H1 (cell line): ENCODE measurements at regions of chr4 and their contacts with region 1.

Region 1: GRCh38 chr4:170990989-170991589 is 822.1 kb upstream of the GALNTL6 start:
- DNase-seq: peak; percentile 27 to 55
- H3K4me3 ChIP-seq: no peak overlapping the region
- H3K27ac ChIP-seq: no peak overlapping the region
- H3K4me1 ChIP-seq: no peaks in the 10 kb centered on the region
- H3K27me3 ChIP-seq: no peaks in the 10 kb centered on the region
- CTCF ChIP-seq: peak in 2 of 3 experiments; percentile 64 to 78; a peak in 3 of 4 replicates
- EP300 ChIP-seq: no peak
- POLR2A ChIP-seq: no peak
- RAD21 ChIP-seq: peak; percentile 80 to 91

Region 2: DNA sequence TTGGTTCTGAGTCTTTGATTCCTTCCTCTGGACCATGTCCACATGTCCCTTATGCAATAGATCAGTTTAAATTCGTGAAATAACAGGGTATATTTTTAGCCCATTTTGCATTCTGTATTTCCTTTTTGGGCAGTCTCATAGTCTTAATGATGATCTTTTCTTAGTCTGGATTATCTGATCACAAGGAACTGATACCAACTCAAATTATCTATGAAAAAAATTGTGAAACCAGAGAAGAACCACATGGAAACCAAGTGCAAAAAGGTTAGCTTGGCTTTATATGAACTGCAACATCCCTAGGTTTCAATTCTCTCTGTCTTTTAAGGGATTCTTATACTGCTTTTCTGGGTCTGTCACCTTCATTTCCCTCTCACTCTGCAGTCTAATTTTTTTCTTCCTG is 292.8 kb before region 1 on chr4:
- CTCF ChIA-PET with region 1: no interaction called
- POLR2A ChIA-PET with region 1: no interaction called
- DNase-seq: no peak
- H3K4me3 ChIP-seq: no peak overlapping the region
- H3K27ac ChIP-seq: no peak overlapping the region
- H3K4me1 ChIP-seq: no peaks in the 10 kb centered on the region
- H3K27me3 ChIP-seq: no peaks in the 10 kb centered on the region
- CTCF ChIP-seq: no peak
- EP300 ChIP-seq: no peak
- POLR2A ChIP-seq: no peak
- RAD21 ChIP-seq: no peak

Region 3: DNA sequence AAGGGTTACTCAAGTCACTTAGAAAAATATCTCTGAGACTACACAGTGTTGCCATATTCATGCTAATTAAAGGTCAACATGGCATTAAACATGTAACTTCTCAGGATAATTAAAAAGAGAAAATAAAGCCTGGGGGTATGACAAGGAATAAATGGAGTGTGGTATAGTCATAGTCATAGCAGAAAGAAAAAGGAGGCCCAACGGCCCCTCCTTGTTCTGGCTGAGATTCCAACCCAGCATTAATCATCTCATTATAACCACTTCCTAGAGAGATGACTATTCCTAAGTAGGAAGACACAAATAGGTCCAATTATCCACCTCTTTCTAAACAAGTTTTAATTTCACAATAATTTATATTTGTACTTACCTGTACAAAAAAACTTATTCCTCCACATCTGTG is 122.9 kb before region 1 on chr4:
- CTCF ChIA-PET with region 1: no interaction called
- POLR2A ChIA-PET with region 1: no interaction called
- DNase-seq: no peak
- H3K4me3 ChIP-seq: no peak overlapping the region
- H3K27ac ChIP-seq: no peak overlapping the region
- H3K4me1 ChIP-seq: no peaks in the 10 kb centered on the region
- H3K27me3 ChIP-seq: no peaks in the 10 kb centered on the region
- CTCF ChIP-seq: no peak
- EP300 ChIP-seq: no peak
- POLR2A ChIP-seq: no peak
- RAD21 ChIP-seq: no peak

Region 4: DNA sequence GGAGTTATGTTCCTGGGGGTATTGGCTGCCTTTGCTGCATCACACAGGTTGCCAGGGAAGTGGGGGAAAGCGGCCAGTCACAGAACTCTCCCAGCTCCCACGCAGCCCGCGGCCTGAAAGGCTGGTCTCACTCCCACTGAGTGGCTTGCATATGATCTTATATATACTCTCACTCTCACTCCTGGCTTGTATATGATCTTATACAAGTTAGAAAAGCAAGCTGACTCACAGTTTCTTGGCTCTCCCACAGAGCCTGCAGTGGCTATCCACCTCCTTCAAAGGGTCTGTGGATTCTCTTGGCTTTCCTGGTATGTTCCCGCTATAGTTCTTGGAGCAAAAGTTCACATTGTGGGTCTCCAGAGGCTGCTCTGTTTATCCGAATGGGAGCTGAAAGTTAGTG is 11.4 kb before region 1 on chr4:
- CTCF ChIA-PET with region 1: interaction called, 12 read pairs
- POLR2A ChIA-PET with region 1: no interaction called
- DNase-seq: no peak
- H3K4me3 ChIP-seq: no peak overlapping the region
- H3K27ac ChIP-seq: no peak overlapping the region
- H3K4me1 ChIP-seq: no peaks in the 10 kb centered on the region
- H3K27me3 ChIP-seq: no peaks in the 10 kb centered on the region
- CTCF ChIP-seq: no peak
- EP300 ChIP-seq: no peak
- POLR2A ChIP-seq: no peak
- RAD21 ChIP-seq: no peak

Region 5: DNA sequence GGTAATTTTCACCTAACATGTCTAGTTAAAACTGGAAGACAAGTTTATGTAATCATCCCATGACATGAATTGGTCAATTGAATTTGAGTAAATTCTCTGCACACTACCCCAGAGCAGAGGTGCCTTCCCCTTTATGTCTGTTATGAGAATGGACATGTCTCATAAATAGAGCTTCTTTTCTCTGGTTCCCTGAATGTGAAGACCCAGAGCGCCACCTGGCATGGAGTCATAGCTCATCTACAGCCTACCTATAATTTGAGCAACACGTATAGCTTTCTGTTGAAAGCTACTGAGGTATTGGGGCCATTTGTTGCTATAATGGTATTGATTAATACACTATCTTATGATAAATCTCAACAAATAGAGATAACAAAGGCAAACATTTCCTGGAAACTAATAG is 195.6 kb after region 1 on chr4:
- CTCF ChIA-PET with region 1: interaction called, 19 read pairs
- POLR2A ChIA-PET with region 1: no interaction called
- DNase-seq: no peak
- H3K4me3 ChIP-seq: no peak overlapping the region
- H3K27ac ChIP-seq: no peak overlapping the region
- H3K4me1 ChIP-seq: no peaks in the 10 kb centered on the region
- H3K27me3 ChIP-seq: no peaks in the 10 kb centered on the region
- CTCF ChIP-seq: peak in 2 of 3 experiments; percentile 27; a peak in 2 of 4 replicates
- EP300 ChIP-seq: no peak
- POLR2A ChIP-seq: no peak
- RAD21 ChIP-seq: peak; percentile 66 to 68